ENCODE measurements at regions of chr6 and their contacts with region 1.

Region 1: GRCh38 chr6:119052292-119052889 is 26.1 kb downstream of the FAM184A start:
- DNase-seq: peak in 3 of 9 donors; percentile 13 to 26 (median 24)
- ATAC-seq: peak; percentile 61
- H3K4me3 ChIP-seq: no peak overlapping the region
- H3K4me3 Mint-ChIP-seq: peak overlapping the region in 2 of 10 donors; percentile 9 to 14
- H3K27ac ChIP-seq: no peak overlapping the region
- H3K27ac Mint-ChIP-seq: peak overlapping the region in 6 of 9 donors; percentile 1 to 74 (median 46)
- H3K4me1 ChIP-seq: no peaks in the 10 kb centered on the region
- H3K4me1 Mint-ChIP-seq: peaks cover 9 to 43% (median 24%) of the 10 kb centered on the region in 7 donors
- H3K27me3 ChIP-seq: no peaks in the 10 kb centered on the region
- H3K27me3 Mint-ChIP-seq: no peaks in the 10 kb centered on the region

Region 2: DNA sequence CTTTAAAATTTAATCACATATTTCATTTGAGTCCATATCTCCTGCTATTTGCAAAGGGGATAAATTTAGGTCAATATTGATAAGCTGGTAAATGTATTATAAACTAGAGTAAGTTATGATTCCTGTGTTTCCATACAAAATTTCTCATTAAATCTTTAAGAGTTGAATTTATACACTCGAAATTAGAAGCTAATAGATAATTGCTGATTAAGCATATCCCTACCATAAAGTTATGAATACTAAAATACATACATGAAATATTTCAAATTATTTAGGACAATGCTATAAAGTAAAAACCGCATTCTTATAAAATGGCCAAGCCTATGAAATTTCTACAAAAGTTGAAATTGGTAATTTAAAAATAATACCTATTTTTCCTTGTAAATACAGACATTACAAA is 45.4 kb before region 1 on chr6:
- CTCF ChIA-PET with region 1: no interaction called
- POLR2A ChIA-PET with region 1: interaction called, 3 read pairs
- intact Hi-C with region 1: loop called in 1 of 2 experiments (anchors 5 kb)
- DNase-seq: no peak
- ATAC-seq: no peak
- H3K4me3 ChIP-seq: no peak overlapping the region
- H3K4me3 Mint-ChIP-seq: no peak overlapping the region
- H3K27ac ChIP-seq: no peak overlapping the region
- H3K27ac Mint-ChIP-seq: no peak overlapping the region
- H3K4me1 ChIP-seq: no peaks in the 10 kb centered on the region
- H3K4me1 Mint-ChIP-seq: peaks cover 0 to 1% (median 0%) of the 10 kb centered on the region in 7 donors
- H3K27me3 ChIP-seq: no peaks in the 10 kb centered on the region
- H3K27me3 Mint-ChIP-seq: no peaks in the 10 kb centered on the region

Measured in naive thymus-derived CD4-positive, alpha-beta T cell (primary cell).